Esophagus squamous epithelium (tissue), 5 donors: ENCODE measurements at regions of chr7 and their contacts with region 1.

Region 1: GRCh38 chr7:85554236-85555178 is 367.7 kb upstream of the SEMA3D start:
- DNase-seq: no peak
- H3K4me3 ChIP-seq: no peak overlapping the region
- H3K27ac ChIP-seq: no peak overlapping the region
- H3K4me1 ChIP-seq: no peaks in the 10 kb centered on the region
- H3K27me3 ChIP-seq: no peaks in the 10 kb centered on the region
- CTCF ChIP-seq: peak in 5 of 6 experiments; percentile 34 to 65 (median 58)
- POLR2A ChIP-seq: no peak

Region 2: GRCh38 chr7:85030893-85031292 is 523.6 kb before region 1 on chr7:
- intact Hi-C with region 1: loop called (anchors 10 kb)
- DNase-seq: no peak
- H3K4me3 ChIP-seq: no peak overlapping the region
- H3K27ac ChIP-seq: no peak overlapping the region
- H3K4me1 ChIP-seq: peaks cover 0 to 5% (median 0%) of the 10 kb centered on the region in 3 donors
- H3K27me3 ChIP-seq: no peaks in the 10 kb centered on the region
- CTCF ChIP-seq: peak in 5 of 6 experiments; percentile 31 to 52 (median 42)
- POLR2A ChIP-seq: no peak

Region 3: GRCh38 chr7:85274454-85274853 is 280.1 kb before region 1 on chr7:
- intact Hi-C with region 1: no loop called
- DNase-seq: no peak
- H3K4me3 ChIP-seq: no peak overlapping the region
- H3K27ac ChIP-seq: no peak overlapping the region
- H3K4me1 ChIP-seq: no peaks in the 10 kb centered on the region
- H3K27me3 ChIP-seq: no peaks in the 10 kb centered on the region
- CTCF ChIP-seq: no peak
- POLR2A ChIP-seq: no peak